Left ventricle myocardium inferior (tissue), 1 donor: ENCODE measurements at regions of chr2 and their contacts with region 1.

Region 1: DNA sequence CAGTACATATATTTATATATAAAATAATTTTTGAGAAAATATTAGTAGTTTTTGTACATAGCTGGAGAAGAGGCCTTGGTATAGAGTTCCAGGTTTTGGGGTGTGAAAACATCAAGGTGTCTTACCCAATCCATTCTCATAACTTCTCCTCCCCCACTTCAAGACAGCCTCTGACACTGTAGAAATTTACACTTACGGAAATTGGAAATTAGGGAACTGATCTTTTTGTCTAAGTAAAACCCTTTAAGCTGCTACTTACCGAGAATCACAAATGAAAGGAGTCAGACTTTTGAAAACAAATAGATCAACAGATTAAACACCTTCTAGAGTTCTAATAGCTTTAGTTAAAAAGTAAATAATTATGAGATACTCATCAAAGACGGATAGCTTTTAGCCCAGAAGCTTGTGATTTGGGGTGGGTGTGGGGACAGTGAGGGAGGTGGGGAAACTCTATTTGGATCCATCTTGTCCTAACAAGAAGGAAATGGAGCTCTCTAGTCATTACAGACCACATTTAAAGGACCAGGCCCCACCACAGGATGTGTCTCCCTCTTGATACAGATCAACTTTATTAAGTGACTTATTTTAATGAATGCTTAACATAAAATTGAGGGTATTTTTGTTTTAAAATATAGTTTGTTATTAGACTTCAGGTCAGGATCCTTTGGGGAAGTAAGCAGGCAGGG is 11.1 kb upstream of the FBXO11 start:
- DNase-seq: no peak
- H3K4me3 ChIP-seq: no peak overlapping the region
- H3K27ac ChIP-seq: no peak overlapping the region
- H3K4me1 ChIP-seq: no peaks in the 10 kb centered on the region
- H3K27me3 ChIP-seq: no peaks in the 10 kb centered on the region
- CTCF ChIP-seq: no peak

Region 2: DNA sequence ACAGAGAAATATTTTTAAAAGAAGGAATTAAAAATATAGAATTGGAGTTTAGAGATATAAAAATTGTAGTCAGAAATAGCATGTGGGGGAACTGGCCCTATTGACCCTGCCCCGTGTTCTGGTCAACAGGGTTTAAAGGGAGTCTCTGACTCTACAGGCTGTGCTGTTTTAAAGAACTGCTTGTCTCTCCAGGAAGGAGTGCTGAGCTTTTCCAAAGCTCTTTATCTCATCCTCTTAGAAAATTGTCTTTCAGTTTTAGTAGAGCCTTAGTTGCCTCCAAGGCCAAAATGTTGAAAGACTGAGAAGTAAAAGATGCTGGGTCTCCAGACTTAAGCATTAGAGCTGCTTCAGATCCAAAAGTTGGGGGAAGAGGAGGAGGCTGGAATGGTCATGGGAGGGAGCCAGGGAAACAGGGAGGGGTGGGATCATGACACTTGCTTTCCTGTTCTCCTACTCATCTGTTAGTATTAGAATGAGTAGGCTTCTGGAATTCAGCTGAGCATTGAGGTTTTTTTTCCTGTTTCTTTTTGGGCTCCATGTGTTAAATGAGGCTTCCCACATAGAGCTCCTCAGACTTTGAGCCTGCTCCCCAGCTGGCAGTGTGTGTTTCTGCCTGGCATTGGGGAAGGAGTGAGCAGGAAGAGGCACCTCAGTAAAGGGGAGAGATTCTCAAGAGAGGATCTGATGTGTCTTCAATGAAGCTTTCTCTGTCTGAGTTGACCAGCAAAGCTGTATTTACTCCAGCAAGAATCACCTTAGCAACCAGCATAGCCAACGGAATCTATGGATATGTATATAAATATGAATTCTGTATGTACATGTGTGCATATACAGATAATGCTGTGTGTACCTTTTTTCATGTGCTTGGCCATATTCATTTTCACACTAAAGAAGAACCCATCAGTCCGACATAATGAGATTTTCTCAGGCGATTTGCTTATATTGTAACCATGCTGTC is 175.7 kb after region 1 on chr2:
- intact Hi-C with region 1: loop called (anchors 10 kb)
- DNase-seq: no peak
- H3K4me3 ChIP-seq: no peak overlapping the region
- H3K27ac ChIP-seq: no peak overlapping the region
- H3K4me1 ChIP-seq: no peaks in the 10 kb centered on the region
- H3K27me3 ChIP-seq: no peaks in the 10 kb centered on the region
- CTCF ChIP-seq: no peak